ENCODE measurements at regions of chr9 and their contacts with region 1.

Region 1: GRCh38 chr9:8907863-8908262 is 1108.3 kb upstream of the DMAC1 start:
- DNase-seq: no peak

Region 2: GRCh38 chr9:8842402-8843193 is 65.3 kb before region 1 on chr9:
- intact Hi-C with region 1: loop called in 1 of 2 experiments (anchors 2 kb)
- DNase-seq: no peak